GM12878 (cell line): ENCODE measurements at regions of chr5 and their contacts with region 1.

Region 1: DNA sequence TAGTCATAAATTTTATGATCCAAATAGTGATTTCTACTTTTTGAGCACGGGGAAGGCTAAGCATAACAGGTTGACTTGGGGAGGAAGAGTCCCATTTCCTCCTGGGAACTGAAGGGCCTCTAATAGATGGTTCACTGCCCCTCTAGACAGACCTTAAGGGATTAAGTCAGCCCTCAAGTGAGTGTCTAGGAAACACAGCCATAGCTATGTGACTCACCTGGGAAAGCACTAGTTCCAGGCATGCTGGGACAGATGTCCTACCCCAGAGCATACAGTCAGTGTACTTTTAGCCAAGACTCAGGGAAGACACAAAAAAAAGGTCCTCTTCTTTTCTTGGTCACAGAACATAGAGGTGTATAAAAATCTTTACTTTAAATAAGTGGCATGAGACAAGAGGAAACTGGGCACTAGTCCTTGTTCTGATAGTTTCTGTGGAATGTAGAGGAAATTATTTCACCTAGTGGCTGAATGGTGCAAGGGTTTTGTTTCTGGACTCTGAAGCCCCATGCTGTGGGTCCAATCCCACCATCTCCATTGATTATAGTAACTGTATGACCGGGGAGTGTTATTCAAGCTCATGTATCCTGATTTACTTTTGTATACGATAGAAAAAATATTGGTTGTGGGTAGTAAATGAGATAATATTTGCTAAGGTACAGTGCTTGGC is 86.0 kb downstream of the NREP start:
- DNase-seq: no peak
- ATAC-seq: no peak
- H3K4me3 ChIP-seq: no peak overlapping the region
- H3K27ac ChIP-seq: no peak overlapping the region
- H3K4me1 ChIP-seq: peaks cover 9% of the 10 kb centered on the region
- H3K27me3 ChIP-seq: no peaks in the 10 kb centered on the region; a peak in 1 of 4 replicates
- CTCF ChIP-seq: no peak
- EP300 ChIP-seq: no peak
- POLR2A ChIP-seq: no peak
- RAD21 ChIP-seq: no peak

Region 2: GRCh38 chr5:111929867-111930266 is 258.9 kb after region 1 on chr5:
- CTCF ChIA-PET with region 1: no interaction called
- POLR2A ChIA-PET with region 1: no interaction called
- RAD21 ChIA-PET with region 1: no interaction called
- SMC1A ChIA-PET with region 1: no interaction called
- in situ Hi-C with region 1: no loop called
- intact Hi-C with region 1: loop called (anchors 10 kb)
- DNase-seq: no peak
- ATAC-seq: no peak
- H3K4me3 ChIP-seq: no peak overlapping the region
- H3K27ac ChIP-seq: no peak overlapping the region
- H3K4me1 ChIP-seq: no peaks in the 10 kb centered on the region
- H3K27me3 ChIP-seq: no peaks in the 10 kb centered on the region
- CTCF ChIP-seq: no peak
- EP300 ChIP-seq: no peak
- POLR2A ChIP-seq: no peak
- RAD21 ChIP-seq: no peak